ENCODE measurements at regions of chrX and their contacts with region 1.

Region 1: DNA sequence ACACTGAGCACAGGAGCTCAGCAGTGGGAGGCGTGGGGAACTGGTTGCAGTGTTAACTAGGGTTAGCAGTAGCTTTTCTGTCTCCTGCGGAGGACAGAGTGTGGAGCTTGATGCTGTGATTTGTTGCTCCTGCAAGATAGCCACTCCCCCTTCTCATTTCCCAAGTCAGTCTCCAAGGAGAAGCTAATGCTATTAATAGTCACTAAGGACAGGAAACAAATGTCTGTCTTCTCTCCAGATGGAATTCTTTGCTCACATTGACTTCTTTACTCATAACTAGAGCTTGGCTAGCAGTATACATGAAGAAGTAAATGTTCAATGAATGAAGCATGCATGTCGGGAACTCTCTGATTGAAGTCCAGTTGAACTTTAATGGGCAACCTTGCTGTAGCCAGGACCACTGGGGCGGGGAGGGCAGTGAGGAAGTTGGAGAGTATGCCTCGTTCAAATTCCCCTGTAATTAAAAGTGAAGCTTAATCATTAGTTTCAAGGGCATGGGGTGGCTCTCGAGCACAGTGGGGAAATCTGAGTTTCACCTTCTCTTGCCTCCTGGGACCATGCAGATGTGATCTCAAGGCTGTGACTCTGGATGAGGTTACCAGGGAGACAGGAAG is 156.6 kb upstream of the SCML1 start:
- DNase-seq: no peak
- H3K4me3 ChIP-seq: no peak overlapping the region
- H3K27ac ChIP-seq: peak overlapping the region in 1 of 4 donors; percentile 28
- H3K4me1 ChIP-seq: peaks cover 0 to 11% (median 8%) of the 10 kb centered on the region in 3 donors
- H3K27me3 ChIP-seq: no peaks in the 10 kb centered on the region
- CTCF ChIP-seq: no peak
- POLR2A ChIP-seq: no peak

Region 2: DNA sequence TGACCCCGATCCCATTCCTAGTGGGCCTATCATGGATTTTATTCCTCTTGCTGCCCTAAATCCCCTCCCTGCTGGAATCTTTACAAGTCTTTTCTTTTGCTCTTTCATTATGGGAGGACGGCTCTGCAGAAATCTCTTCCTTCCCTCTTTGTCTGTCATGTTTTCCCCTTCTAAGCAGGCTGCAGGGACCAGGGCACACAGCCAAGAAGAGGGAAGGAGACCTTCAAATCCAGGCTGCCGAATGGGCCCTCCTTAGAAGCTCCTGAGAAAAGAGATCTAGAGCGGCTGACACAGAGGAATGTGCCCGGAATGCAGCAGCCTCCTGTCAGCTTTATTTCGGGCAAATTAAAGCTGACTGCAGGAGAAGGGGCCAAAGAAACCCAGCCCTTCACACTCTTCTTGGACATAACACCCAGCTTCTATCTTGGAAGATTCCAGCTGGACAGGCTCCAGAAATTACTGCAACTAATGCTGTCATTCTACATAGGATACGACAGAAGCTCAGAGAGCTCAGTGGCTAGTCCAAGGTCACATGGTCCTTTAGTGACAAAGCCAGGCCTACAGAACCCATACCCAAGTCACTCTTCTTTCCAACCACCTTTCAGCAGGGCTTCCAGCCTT is 393.4 kb before region 1 on chrX:
- intact Hi-C with region 1: no loop called
- DNase-seq: no peak
- H3K4me3 ChIP-seq: no peak overlapping the region
- H3K27ac ChIP-seq: no peak overlapping the region
- H3K4me1 ChIP-seq: no peaks in the 10 kb centered on the region
- H3K27me3 ChIP-seq: no peaks in the 10 kb centered on the region
- CTCF ChIP-seq: no peak
- POLR2A ChIP-seq: no peak

Region 3: GRCh38 chrX:17374619-17375366 is 205.9 kb before region 1 on chrX and contains the start of gene NHS:
- intact Hi-C with region 1: loop called (anchors 10 kb)
- DNase-seq: no peak
- H3K4me3 ChIP-seq: peak within 1 kb of the TSS; percentile 46 to 71 (median 58)
- H3K27ac ChIP-seq: peak within 1 kb of the TSS; percentile 51 to 81 (median 78)
- H3K4me1 ChIP-seq: peaks cover 0 to 28% (median 0%) of the 10 kb centered on the region in 3 donors
- H3K27me3 ChIP-seq: peaks cover 0 to 3% (median 0%) of the 10 kb centered on the region in 4 donors
- CTCF ChIP-seq: peak in 5 of 6 experiments; percentile 22 to 42 (median 36)
- POLR2A ChIP-seq: peak in 2 of 4 donors; percentile 28 to 30
- total RNA-seq, gene NHS: 1.2 to 3.4 (median 2.6) TPM

Measured in esophagus squamous epithelium (tissue), 5 donors.